A673 (cell line): ENCODE measurements at regions of chr14 and their contacts with region 1.

Region 1: GRCh38 chr14:59707778-59708561 is 131.4 kb upstream of the CCDC175 start:
- DNase-seq: peak; percentile 37
- H3K4me3 ChIP-seq: no peak overlapping the region
- H3K27ac ChIP-seq: no peak overlapping the region
- H3K4me1 ChIP-seq: no peaks in the 10 kb centered on the region
- H3K27me3 ChIP-seq: no peaks in the 10 kb centered on the region
- CTCF ChIP-seq: peak; percentile 36

Region 2: GRCh38 chr14:59150990-59151389 is 557.0 kb before region 1 on chr14:
- CTCF ChIA-PET with region 1: no interaction called
- POLR2A ChIA-PET with region 1: no interaction called
- intact Hi-C with region 1: no loop called
- DNase-seq: no peak
- H3K4me3 ChIP-seq: no peak overlapping the region
- H3K27ac ChIP-seq: no peak overlapping the region
- H3K4me1 ChIP-seq: no peaks in the 10 kb centered on the region
- H3K27me3 ChIP-seq: no peaks in the 10 kb centered on the region
- CTCF ChIP-seq: no peak

Region 3: DNA sequence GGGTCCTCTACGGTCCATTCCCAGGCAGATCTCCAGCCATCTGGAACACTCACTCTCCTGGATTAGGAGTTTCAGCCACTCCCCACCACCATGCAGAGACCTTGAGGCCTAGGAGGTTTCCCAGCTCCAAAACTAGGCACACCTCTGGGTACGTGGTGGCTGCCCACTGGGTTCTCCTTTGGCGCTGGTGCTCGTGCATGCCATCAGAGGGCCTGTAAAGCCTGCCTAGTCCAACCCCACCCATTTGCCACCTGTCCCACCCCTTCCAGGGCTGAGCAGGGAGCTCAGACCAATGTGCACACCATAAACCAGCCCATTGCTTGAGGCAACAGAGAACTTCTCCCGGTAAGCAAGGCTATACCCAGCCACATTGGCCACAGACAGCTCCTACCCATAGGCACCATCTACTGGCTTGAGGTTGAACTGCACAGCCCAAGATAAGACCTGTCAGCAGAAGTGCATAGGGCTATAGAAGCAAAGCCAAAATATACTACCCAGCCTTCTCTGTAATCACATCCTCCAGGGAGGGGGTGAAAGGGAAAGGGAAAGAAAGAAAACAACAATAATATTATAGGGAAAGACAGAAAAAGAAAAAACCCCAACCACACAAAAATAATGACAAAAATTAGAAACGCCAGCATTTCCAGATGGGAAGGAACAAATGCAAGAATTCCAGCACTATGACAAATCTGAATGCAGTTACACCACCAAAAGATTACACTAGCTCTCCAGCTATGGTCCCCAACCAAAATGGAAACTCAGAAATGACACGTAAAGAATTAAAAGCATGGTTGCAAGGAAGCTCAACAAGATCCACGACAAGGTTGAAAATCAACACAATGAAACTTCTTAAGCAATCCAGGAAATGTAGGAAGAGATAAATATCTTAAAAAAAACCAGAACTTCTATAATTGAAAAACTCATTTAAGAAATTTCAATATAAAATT is 19.5 kb before region 1 on chr14:
- CTCF ChIA-PET with region 1: no interaction called
- POLR2A ChIA-PET with region 1: no interaction called
- intact Hi-C with region 1: no loop called
- DNase-seq: peak; percentile 85
- H3K4me3 ChIP-seq: no peak overlapping the region
- H3K27ac ChIP-seq: no peak overlapping the region
- H3K4me1 ChIP-seq: no peaks in the 10 kb centered on the region
- H3K27me3 ChIP-seq: no peaks in the 10 kb centered on the region
- CTCF ChIP-seq: peak; percentile 94

Region 4: GRCh38 chr14:59897761-59898383 is 189.9 kb after region 1 on chr14:
- CTCF ChIA-PET with region 1: interaction called, 14 read pairs
- POLR2A ChIA-PET with region 1: no interaction called
- intact Hi-C with region 1: loop called (anchors 5 kb)
- DNase-seq: peak; percentile 67
- H3K4me3 ChIP-seq: no peak overlapping the region
- H3K27ac ChIP-seq: no peak overlapping the region
- H3K4me1 ChIP-seq: no peaks in the 10 kb centered on the region
- H3K27me3 ChIP-seq: no peaks in the 10 kb centered on the region
- CTCF ChIP-seq: peak; percentile 63